IMR-90 (cell line): ENCODE measurements at regions of chr18 and their contacts with region 1.

Region 1: DNA sequence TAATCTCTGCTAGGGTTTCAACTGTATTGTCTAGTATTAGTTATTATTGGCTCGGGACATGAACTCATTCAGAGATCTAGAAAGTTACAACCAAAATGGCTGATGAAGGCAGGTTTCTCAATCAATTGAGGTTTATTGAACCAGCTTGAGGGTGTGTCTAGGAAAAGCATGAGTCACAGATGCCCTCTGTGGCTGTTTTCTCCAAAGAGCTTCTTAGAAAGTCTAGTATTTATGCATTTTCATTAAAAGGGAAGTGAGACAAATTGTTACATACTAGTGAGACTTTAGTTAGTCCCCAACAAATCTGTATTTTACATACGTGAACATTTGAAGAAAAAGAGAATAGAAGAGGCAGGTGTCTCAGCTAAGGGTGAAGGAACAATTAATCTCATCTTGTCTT is 23.1 kb upstream of the RTTN start:
- DNase-seq: no peak
- ATAC-seq: no peak
- H3K4me3 ChIP-seq: no peak overlapping the region
- H3K27ac ChIP-seq: no peak overlapping the region
- H3K4me1 ChIP-seq: no peaks in the 10 kb centered on the region
- H3K27me3 ChIP-seq: peaks cover 1% of the 10 kb centered on the region; the same call in 1 of the 2 replicates
- CTCF ChIP-seq: no peak
- POLR2A ChIP-seq: no peak
- RAD21 ChIP-seq: no peak

Region 2: GRCh38 chr18:70273021-70273420 is 44.5 kb after region 1 on chr18:
- CTCF ChIA-PET with region 1: no interaction called
- POLR2A ChIA-PET with region 1: no interaction called
- dilution Hi-C with region 1: no loop called
- in situ Hi-C with region 1: no loop called
- intact Hi-C with region 1: loop called (anchors 5 kb)
- DNase-seq: no peak
- ATAC-seq: no peak
- H3K4me3 ChIP-seq: no peak overlapping the region
- H3K27ac ChIP-seq: no peak overlapping the region
- H3K4me1 ChIP-seq: no peaks in the 10 kb centered on the region
- H3K27me3 ChIP-seq: no peaks in the 10 kb centered on the region
- CTCF ChIP-seq: no peak
- POLR2A ChIP-seq: no peak
- RAD21 ChIP-seq: no peak